ENCODE measurements at regions of chr3 and their contacts with region 1.

Region 1: DNA sequence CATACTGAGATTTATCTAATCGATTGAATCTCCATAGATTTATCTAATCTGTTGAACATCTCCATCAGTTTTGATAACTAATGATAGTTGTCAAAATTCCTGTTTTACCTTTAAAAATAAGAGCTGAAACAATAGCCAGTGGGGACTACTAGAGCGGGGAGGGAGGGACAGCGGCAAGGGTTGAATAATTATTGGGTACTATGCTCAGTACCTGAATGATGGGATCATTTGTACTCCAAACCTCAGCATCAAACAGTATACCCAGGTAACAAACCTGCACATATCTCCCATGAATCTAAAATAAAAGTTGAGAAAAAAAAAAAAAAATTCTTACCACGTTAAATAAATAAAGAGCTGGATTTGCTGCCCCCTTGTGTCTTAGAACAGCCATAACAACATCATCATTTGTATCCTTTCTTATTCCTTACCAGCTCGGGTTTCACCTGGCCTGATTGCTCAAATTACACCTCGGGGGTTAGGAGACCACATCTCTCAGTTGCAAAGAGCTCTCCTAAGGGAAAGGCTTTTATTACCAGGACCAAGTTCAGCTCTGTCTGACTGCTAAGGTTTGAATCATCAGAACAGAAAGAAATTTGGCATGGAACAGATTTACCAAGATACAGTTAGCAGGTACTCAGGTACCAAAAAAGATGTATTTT is 25.7 kb upstream of the RPL39L start:
- DNase-seq: no peak
- ATAC-seq: peak; percentile 78 to 86 (median 82)
- H3K4me3 ChIP-seq: no peak overlapping the region
- H3K27ac ChIP-seq: no peak overlapping the region
- H3K4me1 ChIP-seq: no peaks in the 10 kb centered on the region
- H3K27me3 ChIP-seq: no peaks in the 10 kb centered on the region
- CTCF ChIP-seq: peak; percentile 68 to 73 (median 70)
- POLR2A ChIP-seq: no peak

Region 2: GRCh38 chr3:186849374-186849975 is 315.5 kb before region 1 on chr3:
- intact Hi-C with region 1: loop called in 1 of 2 experiments (anchors 5 kb)
- DNase-seq: no peak
- ATAC-seq: peak; percentile 79 to 91 (median 84)
- H3K4me3 ChIP-seq: no peak overlapping the region
- H3K27ac ChIP-seq: no peak overlapping the region
- H3K4me1 ChIP-seq: peaks cover 0 to 2% (median 0%) of the 10 kb centered on the region in 4 donors
- H3K27me3 ChIP-seq: no peaks in the 10 kb centered on the region
- CTCF ChIP-seq: peak; percentile 56 to 59 (median 58)
- POLR2A ChIP-seq: no peak

Region 3: DNA sequence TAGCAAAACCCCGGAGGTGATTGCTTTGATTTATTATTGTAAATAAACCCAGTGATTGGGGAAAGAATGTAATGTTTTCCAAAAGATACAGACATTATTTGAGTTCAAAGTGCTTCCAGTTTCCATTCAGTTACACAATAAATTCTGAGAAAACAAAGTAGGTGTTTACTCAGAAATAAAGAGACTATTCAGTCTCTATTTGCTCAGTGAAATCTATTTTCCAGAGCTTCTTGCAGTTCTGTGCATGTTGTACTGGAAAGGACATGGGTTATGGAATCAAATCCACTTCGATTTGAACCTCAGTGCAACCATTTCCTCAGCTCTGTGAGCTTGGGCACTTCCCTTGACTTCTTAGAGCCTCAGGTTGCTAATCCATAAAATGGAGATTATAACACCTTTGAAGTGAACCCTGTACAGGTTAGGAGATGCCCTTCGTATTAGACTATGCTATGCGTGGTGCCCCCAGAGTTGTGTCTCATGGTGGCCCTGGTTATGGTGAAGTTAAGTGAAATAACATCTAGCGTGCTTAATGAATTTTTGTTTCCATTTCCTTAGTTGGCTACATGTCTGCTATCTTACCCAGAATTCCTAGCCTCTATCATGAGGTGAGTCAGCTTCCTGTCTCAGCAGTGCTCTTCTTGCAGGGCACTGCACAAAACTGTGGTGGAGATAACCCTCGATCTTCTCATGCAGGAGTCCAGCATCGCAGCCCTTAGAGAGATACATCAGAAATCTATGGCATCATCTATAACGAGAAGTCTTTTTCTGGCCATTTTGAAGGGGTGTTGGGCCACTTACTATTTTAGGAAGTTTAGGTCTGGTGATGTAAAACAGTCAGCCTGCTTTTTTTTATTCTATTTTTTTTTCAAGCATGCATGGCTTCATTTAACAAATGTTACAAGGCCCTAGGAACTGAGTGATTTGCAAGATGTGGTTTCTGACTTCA is 123.4 kb before region 1 on chr3:
- intact Hi-C with region 1: no loop called
- DNase-seq: no peak
- ATAC-seq: peak; percentile 34 to 55 (median 46)
- H3K4me3 ChIP-seq: peak overlapping the region; percentile 40 to 67 (median 63)
- H3K27ac ChIP-seq: peak overlapping the region; percentile 85 to 97 (median 95)
- H3K4me1 ChIP-seq: peaks cover 0 to 59% (median 23%) of the 10 kb centered on the region in 4 donors
- H3K27me3 ChIP-seq: no peaks in the 10 kb centered on the region
- CTCF ChIP-seq: no peak
- POLR2A ChIP-seq: peak; percentile 66

Region 4: GRCh38 chr3:187101184-187102072 is 63.6 kb before region 1 on chr3:
- intact Hi-C with region 1: loop called in 1 of 2 experiments (anchors 10 kb)
- DNase-seq: peak; percentile 75 to 87 (median 75)
- ATAC-seq: peak; percentile 87 to 91 (median 89)
- H3K4me3 ChIP-seq: peak overlapping the region; percentile 10 to 44 (median 29)
- H3K27ac ChIP-seq: peak overlapping the region; percentile 15 to 45 (median 37)
- H3K4me1 ChIP-seq: peaks cover 0 to 9% (median 0%) of the 10 kb centered on the region in 4 donors
- H3K27me3 ChIP-seq: no peaks in the 10 kb centered on the region
- CTCF ChIP-seq: no peak
- POLR2A ChIP-seq: no peak

Region 5: DNA sequence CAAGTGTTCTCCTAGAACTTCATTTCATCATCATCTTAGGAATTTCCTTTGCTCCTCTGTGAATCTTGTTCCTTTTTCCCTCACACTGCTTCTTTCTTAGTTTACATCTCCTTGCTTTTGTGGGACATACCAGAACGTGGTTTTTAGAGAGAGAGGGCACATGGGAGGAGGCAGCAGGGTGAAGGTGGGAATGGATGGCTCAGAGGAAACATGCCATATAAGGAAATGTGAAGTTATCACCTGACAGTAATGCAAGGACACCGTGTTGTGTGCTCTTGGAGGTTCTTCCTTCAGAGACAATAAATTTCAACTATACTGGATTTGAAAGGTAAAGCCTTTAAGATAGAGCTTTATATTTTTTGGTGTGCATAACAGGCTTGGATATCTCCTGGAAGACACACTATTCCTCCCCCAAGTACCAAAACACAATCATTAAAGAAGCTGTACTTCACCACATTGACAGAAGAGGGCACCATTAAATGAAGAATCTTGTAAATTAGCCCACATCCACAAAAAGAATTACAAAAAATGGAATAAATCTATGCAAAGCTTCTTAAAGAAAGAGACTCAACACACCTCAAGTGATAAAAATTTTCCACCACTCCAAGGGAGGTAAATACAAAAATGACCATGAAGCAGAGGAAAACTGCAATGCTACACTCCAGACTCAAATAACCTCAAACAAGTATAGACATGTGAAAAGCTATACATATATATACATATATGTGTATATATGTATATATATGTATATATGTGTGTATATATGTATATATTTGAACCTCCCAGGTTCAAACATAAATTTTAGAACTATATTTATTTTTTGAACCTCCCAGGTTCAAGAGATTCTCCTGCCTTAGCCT is 51.9 kb before region 1 on chr3:
- intact Hi-C with region 1: loop called (anchors 10 kb)
- DNase-seq: no peak
- ATAC-seq: peak; percentile 59 to 73 (median 65)
- H3K4me3 ChIP-seq: no peak overlapping the region
- H3K27ac ChIP-seq: no peak overlapping the region
- H3K4me1 ChIP-seq: no peaks in the 10 kb centered on the region
- H3K27me3 ChIP-seq: no peaks in the 10 kb centered on the region
- CTCF ChIP-seq: peak; percentile 49 to 66 (median 61)
- POLR2A ChIP-seq: no peak

Measured in right lobe of liver (tissue), 6 donors.